B cell (primary cell): ENCODE measurements at regions of chr3 and their contacts with region 1.

Region 1: DNA sequence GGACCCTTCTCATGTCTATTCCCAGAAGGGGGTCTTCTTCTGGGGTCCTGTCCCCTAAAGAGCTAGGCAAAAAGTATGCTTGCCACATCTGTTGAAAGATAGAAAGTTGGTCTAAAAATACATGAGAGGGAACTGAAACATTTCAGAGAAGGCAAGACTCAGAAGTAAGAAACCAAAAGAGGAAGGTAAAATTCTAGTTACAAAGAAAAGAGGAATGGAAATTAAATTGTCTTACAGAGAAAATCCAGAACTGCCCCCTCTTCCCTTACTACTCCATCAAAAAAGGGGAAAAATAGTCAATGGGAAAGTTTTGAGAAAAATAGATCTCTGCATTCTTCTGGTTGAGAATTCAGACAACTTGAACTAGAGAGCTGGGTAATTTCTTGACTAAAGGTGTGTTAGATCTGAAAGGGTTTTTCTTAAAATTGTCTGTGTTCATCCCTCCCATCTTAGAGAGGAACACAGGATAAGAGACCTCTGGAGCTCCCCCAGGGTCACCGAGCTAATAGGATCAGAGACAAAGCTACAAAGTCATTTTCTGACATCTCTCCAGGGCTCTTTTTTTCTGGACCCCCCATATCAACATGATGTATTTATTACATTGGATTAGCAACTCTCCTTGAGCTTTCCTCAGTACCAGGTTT is 32.3 kb upstream of the CCR2 start:
- DNase-seq: peak; percentile 64
- ATAC-seq: peak; percentile 65
- H3K4me3 ChIP-seq: peak overlapping the region in 3 of 5 experiments; percentile 16 to 47 (median 33)
- H3K4me3 Mint-ChIP-seq: peak overlapping the region; percentile 55
- H3K27ac ChIP-seq: peak overlapping the region; percentile 25 to 76
- H3K27ac Mint-ChIP-seq: peak overlapping the region; percentile 69
- H3K4me1 ChIP-seq: peaks cover 35% of the 10 kb centered on the region in 2 donors
- H3K4me1 Mint-ChIP-seq: peaks cover 47% of the 10 kb centered on the region
- H3K27me3 ChIP-seq: no peaks in the 10 kb centered on the region
- H3K27me3 Mint-ChIP-seq: no peaks in the 10 kb centered on the region
- CTCF ChIP-seq: no peak

Region 2: DNA sequence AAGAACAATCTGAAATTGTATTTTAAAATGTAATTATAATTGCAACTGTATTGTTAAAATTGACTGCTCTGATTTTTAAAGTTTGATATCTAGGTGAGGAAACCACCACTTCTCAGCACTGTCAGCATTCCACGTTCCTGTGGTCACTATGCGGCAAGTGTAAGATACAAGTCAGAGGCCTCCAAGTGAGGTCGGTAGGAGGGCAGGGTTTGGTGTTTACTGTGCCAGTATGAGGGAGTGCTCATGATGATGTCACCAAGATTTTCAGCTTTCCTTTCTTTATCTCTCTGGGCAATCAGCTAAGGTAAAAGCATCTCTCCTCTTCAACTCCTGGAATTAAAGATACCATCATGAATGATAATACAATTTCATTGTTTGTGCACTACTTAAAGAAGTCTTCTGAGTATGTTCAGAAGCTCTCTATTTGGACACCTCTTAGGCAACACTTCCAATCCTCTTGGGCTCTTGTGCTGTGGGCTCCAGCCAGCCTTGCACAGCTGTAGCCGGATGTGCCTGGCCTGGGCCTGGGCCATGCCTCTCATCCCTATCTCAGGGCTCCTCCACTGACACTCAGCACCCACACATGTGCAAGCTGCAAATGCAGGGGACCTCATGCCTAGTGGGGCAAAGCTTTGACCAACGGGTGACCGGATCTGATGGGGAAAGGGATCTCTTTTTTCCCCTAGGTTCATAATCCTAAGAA is 36.5 kb before region 1 on chr3:
- CTCF ChIA-PET with region 1: no interaction called
- POLR2A ChIA-PET with region 1: no interaction called
- intact Hi-C with region 1: loop called (anchors 5 kb)
- DNase-seq: no peak
- ATAC-seq: no peak
- H3K4me3 ChIP-seq: no peak overlapping the region
- H3K4me3 Mint-ChIP-seq: no peak overlapping the region
- H3K27ac ChIP-seq: no peak overlapping the region
- H3K27ac Mint-ChIP-seq: no peak overlapping the region
- H3K4me1 ChIP-seq: peaks cover 12 to 15% of the 10 kb centered on the region in 2 donors
- H3K4me1 Mint-ChIP-seq: peaks cover 20% of the 10 kb centered on the region
- H3K27me3 ChIP-seq: no peaks in the 10 kb centered on the region
- H3K27me3 Mint-ChIP-seq: no peaks in the 10 kb centered on the region
- CTCF ChIP-seq: no peak

Region 3: GRCh38 chr3:46299608-46300460 is 21.7 kb before region 1 on chr3:
- CTCF ChIA-PET with region 1: no interaction called
- POLR2A ChIA-PET with region 1: no interaction called
- intact Hi-C with region 1: loop called (anchors 1 kb)
- DNase-seq: peak; percentile 74
- ATAC-seq: peak; percentile 78
- H3K4me3 ChIP-seq: no peak overlapping the region
- H3K4me3 Mint-ChIP-seq: peak overlapping the region; percentile 26
- H3K27ac ChIP-seq: peak overlapping the region in 1 of 2 donors; percentile 29
- H3K27ac Mint-ChIP-seq: peak overlapping the region; percentile 54
- H3K4me1 ChIP-seq: peaks cover 41 to 51% of the 10 kb centered on the region in 2 donors
- H3K4me1 Mint-ChIP-seq: peaks cover 53% of the 10 kb centered on the region
- H3K27me3 ChIP-seq: no peaks in the 10 kb centered on the region
- H3K27me3 Mint-ChIP-seq: no peaks in the 10 kb centered on the region
- CTCF ChIP-seq: no peak

Region 4: GRCh38 chr3:46359733-46360493 is 38.3 kb after region 1 on chr3:
- CTCF ChIA-PET with region 1: no interaction called
- POLR2A ChIA-PET with region 1: no interaction called
- intact Hi-C with region 1: loop called (anchors 5 kb)
- DNase-seq: no peak
- ATAC-seq: peak; percentile 10
- H3K4me3 ChIP-seq: no peak overlapping the region
- H3K4me3 Mint-ChIP-seq: no peak overlapping the region
- H3K27ac ChIP-seq: no peak overlapping the region
- H3K27ac Mint-ChIP-seq: no peak overlapping the region
- H3K4me1 ChIP-seq: peaks cover 21 to 40% of the 10 kb centered on the region in 2 donors
- H3K4me1 Mint-ChIP-seq: peaks cover 54% of the 10 kb centered on the region
- H3K27me3 ChIP-seq: no peaks in the 10 kb centered on the region
- H3K27me3 Mint-ChIP-seq: no peaks in the 10 kb centered on the region
- CTCF ChIP-seq: no peak